HCT116 (cell line): ENCODE measurements at regions of chr7 and their contacts with region 1.

Region 1: DNA sequence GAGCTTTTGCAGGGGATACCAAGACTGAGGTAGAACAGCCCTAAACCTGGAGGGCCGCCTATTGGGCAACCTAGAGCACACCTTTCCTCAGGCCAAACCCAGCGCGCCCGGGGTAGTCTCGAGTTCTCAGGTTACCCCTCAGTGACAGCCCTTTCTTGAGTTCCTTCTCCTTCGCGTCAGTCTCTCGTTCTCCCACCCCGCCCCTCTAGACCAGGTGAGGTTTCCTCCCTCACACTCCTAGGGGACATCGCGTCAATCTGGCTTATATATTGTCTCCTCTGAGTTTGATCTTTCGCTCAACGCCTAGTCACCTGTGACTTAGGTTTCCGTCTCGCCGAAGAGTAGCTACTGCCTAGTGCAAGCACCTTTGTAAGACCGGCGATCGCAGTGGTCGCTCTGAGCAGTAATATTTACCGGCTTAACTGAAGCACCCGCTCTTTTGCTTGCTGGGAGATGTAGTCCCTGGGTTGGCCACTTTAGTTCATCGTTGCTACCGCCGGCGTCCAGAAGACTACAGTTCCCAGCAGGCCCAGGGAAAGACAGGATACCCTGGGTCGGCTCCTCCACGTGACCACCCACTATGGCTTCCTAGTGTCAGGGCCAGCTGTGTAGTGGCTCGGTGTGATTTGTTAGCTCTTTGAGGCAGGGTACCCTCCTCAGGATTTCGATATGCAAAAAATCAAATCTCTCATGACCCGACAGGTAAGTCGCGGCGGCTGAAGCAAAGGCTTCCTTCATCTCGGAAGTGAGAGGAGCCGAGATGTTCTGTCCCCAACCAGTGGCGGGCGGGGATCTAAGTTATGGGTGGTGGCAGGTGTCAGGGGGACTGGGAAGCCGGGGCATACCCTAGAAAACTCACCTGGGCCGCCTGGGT is at the start of gene VPS50:
- DNase-seq: peak; percentile 95
- ATAC-seq: peak; percentile 96
- H3K4me3 ChIP-seq: peak within 1 kb of the TSS; percentile 88 to 90
- H3K27ac ChIP-seq: peak within 1 kb of the TSS; percentile 63
- H3K4me1 ChIP-seq: peaks cover 4 to 15% of the 10 kb centered on the region in 2 experiments; a peak in 3 of 4 replicates
- H3K27me3 ChIP-seq: no peaks in the 10 kb centered on the region
- CTCF ChIP-seq: 0 out of 6 replicates have a peak, but pooled peaks of 1 of the 3 experiments have one; percentile 2
- POLR2A ChIP-seq: peak; percentile 54
- RAD21 ChIP-seq: peak; percentile 23; the same call in 1 of the 2 replicates
- total RNA-seq, gene VPS50: 15.1 TPM

Region 2: GRCh38 chr7:92336662-92337340 is 895.2 kb before region 1 on chr7:
- CTCF ChIA-PET with region 1: no interaction called
- POLR2A ChIA-PET with region 1: no interaction called
- RAD21 ChIA-PET with region 1: no interaction called
- intact Hi-C with region 1: no loop called
- DNase-seq: no peak
- ATAC-seq: no peak
- H3K4me3 ChIP-seq: no peak overlapping the region
- H3K27ac ChIP-seq: no peak overlapping the region
- H3K4me1 ChIP-seq: no peaks in the 10 kb centered on the region
- H3K27me3 ChIP-seq: no peaks in the 10 kb centered on the region
- CTCF ChIP-seq: no peak
- POLR2A ChIP-seq: no peak
- RAD21 ChIP-seq: no peak

Region 3: GRCh38 chr7:92528188-92528957 is 703.7 kb before region 1 on chr7 and contains the starts of genes PEX1 and RBM48:
- CTCF ChIA-PET with region 1: no interaction called
- POLR2A ChIA-PET with region 1: no interaction called
- RAD21 ChIA-PET with region 1: no interaction called
- intact Hi-C with region 1: loop called (anchors 5 kb)
- DNase-seq: peak; percentile 99
- ATAC-seq: peak; percentile 95
- H3K4me3 ChIP-seq: peak within 1 kb of the TSS; percentile 83 to 85
- H3K27ac ChIP-seq: peak within 1 kb of the TSS; percentile 79
- H3K4me1 ChIP-seq: peaks cover 5 to 12% of the 10 kb centered on the region in 2 experiments; a peak in 3 of 4 replicates
- H3K27me3 ChIP-seq: no peaks in the 10 kb centered on the region
- CTCF ChIP-seq: peak in 2 of 3 experiments; percentile 12 to 53; a peak in 2 of 6 replicates
- POLR2A ChIP-seq: no peak
- RAD21 ChIP-seq: no peak
- total RNA-seq, gene PEX1: 13.1 TPM
- total RNA-seq, gene RBM48: 14.6 TPM

Region 4: GRCh38 chr7:92621026-92621540 is 611.0 kb before region 1 on chr7:
- CTCF ChIA-PET with region 1: no interaction called
- POLR2A ChIA-PET with region 1: no interaction called
- RAD21 ChIA-PET with region 1: no interaction called
- intact Hi-C with region 1: loop called (anchors 5 kb)
- DNase-seq: peak; percentile 53
- ATAC-seq: peak; percentile 81
- H3K4me3 ChIP-seq: no peak overlapping the region
- H3K27ac ChIP-seq: peak overlapping the region; percentile 1; the same call in 1 of the 2 replicates
- H3K4me1 ChIP-seq: peaks cover 3 to 28% of the 10 kb centered on the region in 2 experiments; a peak in 3 of 4 replicates
- H3K27me3 ChIP-seq: no peaks in the 10 kb centered on the region
- CTCF ChIP-seq: peak; percentile 58 to 83 (median 73)
- POLR2A ChIP-seq: no peak
- RAD21 ChIP-seq: peak; percentile 95

Region 5: DNA sequence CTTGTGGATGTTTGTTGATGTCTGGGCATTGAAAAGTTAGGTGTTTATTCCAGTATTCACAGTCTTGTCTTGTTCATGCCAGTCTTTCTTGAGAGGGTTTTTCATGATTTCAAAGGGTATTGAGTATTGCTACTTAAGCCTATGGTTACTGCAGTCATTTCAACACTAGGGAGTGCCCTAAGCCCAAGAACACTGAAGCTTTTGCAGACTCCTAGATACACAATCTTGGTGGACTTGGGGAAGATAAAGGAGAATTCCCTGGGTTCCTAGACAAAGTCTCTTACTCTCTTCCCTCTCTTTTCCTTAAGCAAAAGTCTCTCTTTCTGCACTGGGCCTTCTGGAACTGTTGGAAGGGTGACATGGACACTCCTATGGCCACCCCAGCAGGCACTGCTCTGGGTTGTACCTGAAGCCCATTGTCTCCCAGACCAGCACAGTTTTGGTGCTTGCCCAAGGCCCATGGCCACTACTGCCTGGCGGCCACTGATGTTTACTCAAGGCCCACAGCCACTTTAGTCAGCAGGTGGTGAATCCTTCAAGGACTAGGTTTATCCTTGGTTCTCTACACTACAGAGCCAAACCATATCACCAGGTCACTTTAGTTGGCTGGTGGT is 139.2 kb before region 1 on chr7:
- CTCF ChIA-PET with region 1: interaction called, 3 read pairs
- POLR2A ChIA-PET with region 1: no interaction called
- RAD21 ChIA-PET with region 1: no interaction called
- intact Hi-C with region 1: loop called (anchors 1 kb)
- DNase-seq: peak; percentile 21
- ATAC-seq: peak; percentile 81
- H3K4me3 ChIP-seq: no peak overlapping the region
- H3K27ac ChIP-seq: no peak overlapping the region
- H3K4me1 ChIP-seq: no peaks in the 10 kb centered on the region
- H3K27me3 ChIP-seq: no peaks in the 10 kb centered on the region
- CTCF ChIP-seq: peak; percentile 43 to 54 (median 50); a peak in 5 of 6 replicates
- POLR2A ChIP-seq: no peak
- RAD21 ChIP-seq: peak; percentile 73

Region 6: DNA sequence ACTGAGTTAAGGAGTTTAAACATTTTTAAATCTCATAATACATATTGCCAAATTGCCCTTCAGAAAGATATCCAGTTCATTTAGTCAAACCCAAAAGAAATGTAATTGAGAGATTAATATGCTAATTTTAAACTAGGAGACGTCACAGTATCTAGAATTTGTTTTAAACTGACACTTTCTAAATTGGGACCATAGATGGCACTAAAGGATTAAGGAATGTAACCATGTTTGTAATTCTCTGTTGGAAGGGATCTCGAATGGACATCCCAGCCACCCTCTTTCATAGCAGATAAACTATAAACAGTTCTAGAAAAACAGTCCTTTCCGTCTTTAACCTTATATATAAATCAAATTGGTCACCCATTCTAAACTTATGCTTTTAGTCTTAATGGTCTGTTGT is 53.8 kb before region 1 on chr7:
- CTCF ChIA-PET with region 1: interaction called, 5 read pairs
- POLR2A ChIA-PET with region 1: no interaction called
- RAD21 ChIA-PET with region 1: no interaction called
- intact Hi-C with region 1: loop called (anchors 5 kb)
- DNase-seq: no peak
- ATAC-seq: peak; percentile 58; the same call in 1 of the 2 replicates
- H3K4me3 ChIP-seq: no peak overlapping the region
- H3K27ac ChIP-seq: no peak overlapping the region
- H3K4me1 ChIP-seq: no peaks in the 10 kb centered on the region
- H3K27me3 ChIP-seq: peaks cover 17% of the 10 kb centered on the region; the same call in 1 of the 2 replicates
- CTCF ChIP-seq: peak in 2 of 3 experiments; percentile 28 to 30; a peak in 3 of 6 replicates
- POLR2A ChIP-seq: no peak
- RAD21 ChIP-seq: peak; percentile 59